IMR-90 (cell line): ENCODE measurements at regions of chr3 and their contacts with region 1.

Region 1: GRCh38 chr3:125062888-125063618 is 7.3 kb upstream of the HEG1 start:
- DNase-seq: peak; percentile 97
- ATAC-seq: peak; percentile 86
- H3K4me3 ChIP-seq: no peak overlapping the region
- H3K27ac ChIP-seq: peak overlapping the region; percentile 93
- H3K4me1 ChIP-seq: peaks cover 30% of the 10 kb centered on the region
- H3K27me3 ChIP-seq: no peaks in the 10 kb centered on the region
- CTCF ChIP-seq: no peak
- POLR2A ChIP-seq: no peak
- RAD21 ChIP-seq: no peak

Region 2: DNA sequence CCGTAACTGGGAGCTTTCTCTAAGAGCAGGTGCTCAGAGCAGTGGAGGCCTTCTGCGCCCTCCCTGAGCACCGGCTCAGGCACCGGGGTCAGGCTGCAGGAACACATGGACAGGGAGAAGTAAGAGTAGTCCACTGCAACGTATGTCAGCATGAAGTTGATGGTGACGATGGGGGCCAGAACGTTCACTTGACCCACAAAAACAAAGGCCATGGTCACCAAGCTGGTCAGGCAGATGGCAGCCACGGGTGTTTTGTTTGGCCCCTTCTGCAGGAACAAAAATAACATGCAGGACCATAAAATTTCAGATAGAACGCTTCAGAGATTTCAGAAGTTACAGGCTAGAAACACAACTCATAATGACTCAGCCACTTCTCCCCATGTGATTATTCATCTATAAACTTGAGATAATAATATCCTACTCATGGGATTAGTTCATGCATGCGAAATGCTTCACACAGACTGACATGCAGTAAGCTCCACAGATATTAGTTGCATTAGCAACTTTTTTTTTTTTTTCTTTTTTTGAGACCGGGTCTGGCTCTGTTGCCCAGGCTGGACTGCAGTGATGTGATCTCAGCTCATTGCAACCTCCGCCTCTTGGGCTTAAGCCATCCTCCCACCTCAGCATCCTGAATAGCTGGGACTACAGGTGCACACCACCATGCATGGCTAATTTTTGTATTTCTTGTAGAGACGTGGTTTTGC is 45.0 kb after region 1 on chr3:
- CTCF ChIA-PET with region 1: interaction called, 3 read pairs
- POLR2A ChIA-PET with region 1: interaction called, 3 read pairs
- dilution Hi-C with region 1: no loop called
- in situ Hi-C with region 1: no loop called
- intact Hi-C with region 1: loop called (anchors 2 kb)
- DNase-seq: peak; percentile 95
- ATAC-seq: peak; percentile 53
- H3K4me3 ChIP-seq: no peak overlapping the region
- H3K27ac ChIP-seq: peak overlapping the region; percentile 71
- H3K4me1 ChIP-seq: peaks cover 40% of the 10 kb centered on the region
- H3K27me3 ChIP-seq: no peaks in the 10 kb centered on the region
- CTCF ChIP-seq: no peak
- POLR2A ChIP-seq: no peak
- RAD21 ChIP-seq: no peak